BJ (cell line): ENCODE measurements at regions of chr2 and their contacts with region 1.

Region 1: GRCh38 chr2:231411831-231412617 is 16.5 kb downstream of the B3GNT7 start:
- DNase-seq: peak; percentile 29
- H3K4me3 ChIP-seq: peak overlapping the region; percentile 64
- H3K27me3 ChIP-seq: no peaks in the 10 kb centered on the region; the same call in 1 of the 2 replicates
- CTCF ChIP-seq: peak; percentile 93

Region 2: GRCh38 chr2:231104115-231104713 is 307.8 kb before region 1 on chr2:
- CTCF ChIA-PET with region 1: interaction called, 22 read pairs
- POLR2A ChIA-PET with region 1: no interaction called
- DNase-seq: peak; percentile 31
- H3K4me3 ChIP-seq: no peak overlapping the region
- H3K27me3 ChIP-seq: no peaks in the 10 kb centered on the region
- CTCF ChIP-seq: peak; percentile 84

Region 3: GRCh38 chr2:231222318-231223055 is 189.5 kb before region 1 on chr2:
- CTCF ChIA-PET with region 1: interaction called, 51 read pairs
- POLR2A ChIA-PET with region 1: no interaction called
- DNase-seq: no peak
- H3K4me3 ChIP-seq: no peak overlapping the region
- H3K27me3 ChIP-seq: no peaks in the 10 kb centered on the region
- CTCF ChIP-seq: no peak

Region 4: GRCh38 chr2:231297108-231297908 is 114.7 kb before region 1 on chr2:
- CTCF ChIA-PET with region 1: interaction called, 75 read pairs
- POLR2A ChIA-PET with region 1: no interaction called
- DNase-seq: no peak
- H3K4me3 ChIP-seq: no peak overlapping the region
- H3K27me3 ChIP-seq: no peaks in the 10 kb centered on the region
- CTCF ChIP-seq: peak; percentile 76

Region 5: GRCh38 chr2:231399853-231400680 is 12.0 kb before region 1 on chr2:
- CTCF ChIA-PET with region 1: interaction called, 33 read pairs
- POLR2A ChIA-PET with region 1: no interaction called
- DNase-seq: no peak
- H3K4me3 ChIP-seq: no peak overlapping the region
- H3K27me3 ChIP-seq: peaks cover 6% of the 10 kb centered on the region
- CTCF ChIP-seq: no peak

Region 6: GRCh38 chr2:231452799-231453508 is 40.9 kb after region 1 on chr2:
- CTCF ChIA-PET with region 1: interaction called, 21 read pairs
- POLR2A ChIA-PET with region 1: interaction called, 23 read pairs
- DNase-seq: no peak
- H3K4me3 ChIP-seq: no peak overlapping the region
- H3K27me3 ChIP-seq: no peaks in the 10 kb centered on the region
- CTCF ChIP-seq: no peak

Region 7: DNA sequence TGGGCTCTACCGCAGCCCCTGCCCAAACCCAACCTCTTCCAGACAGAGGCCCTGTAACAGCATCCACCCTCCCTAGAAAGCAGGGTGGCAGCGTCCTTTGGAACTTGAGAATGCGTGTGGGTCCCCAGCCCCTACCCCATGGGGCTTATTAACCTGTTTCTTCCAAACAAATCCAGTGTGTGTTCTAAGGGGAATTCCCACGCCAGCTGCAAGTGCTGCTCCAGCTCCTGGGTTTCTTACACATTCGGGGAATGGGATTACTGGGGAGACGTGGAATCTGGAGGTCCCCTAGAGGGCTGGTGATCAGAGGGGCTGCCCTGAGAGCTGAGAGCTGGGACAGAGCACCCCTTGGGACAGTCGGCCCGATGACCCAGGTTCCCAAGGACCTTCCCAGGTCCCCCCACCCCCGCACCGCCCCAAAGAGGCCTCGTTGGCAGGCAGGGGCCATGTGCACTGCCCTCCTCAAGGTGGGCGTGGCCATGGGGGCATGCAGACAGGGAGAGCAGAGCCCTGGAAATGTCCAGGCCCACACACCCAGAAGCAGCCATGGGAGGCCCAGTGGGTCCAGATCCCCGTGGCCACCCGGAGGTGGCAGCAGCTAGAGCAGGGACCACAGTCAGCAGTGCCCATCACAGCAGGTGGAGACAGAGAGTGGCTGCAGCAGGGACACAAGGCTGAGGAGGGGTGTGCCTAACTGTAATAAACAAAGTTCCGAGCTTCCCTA is 161.8 kb after region 1 on chr2:
- CTCF ChIA-PET with region 1: no interaction called
- POLR2A ChIA-PET with region 1: no interaction called
- DNase-seq: no peak
- H3K4me3 ChIP-seq: no peak overlapping the region
- H3K27me3 ChIP-seq: no peaks in the 10 kb centered on the region
- CTCF ChIP-seq: no peak